ENCODE measurements at regions of chr12 and their contacts with region 1.

Region 1: GRCh38 chr12:122399592-122400373 is 22.7 kb downstream of the CLIP1 start:
- DNase-seq: peak; percentile 82
- H3K4me3 ChIP-seq: peak overlapping the region in 1 of 3 experiments; percentile 20
- H3K27ac ChIP-seq: peak overlapping the region; percentile 94
- H3K4me1 ChIP-seq: peaks cover 21% of the 10 kb centered on the region
- H3K27me3 ChIP-seq: no peaks in the 10 kb centered on the region
- CTCF ChIP-seq: peak; percentile 62 to 67
- POLR2A ChIP-seq: peak; percentile 10

Region 2: DNA sequence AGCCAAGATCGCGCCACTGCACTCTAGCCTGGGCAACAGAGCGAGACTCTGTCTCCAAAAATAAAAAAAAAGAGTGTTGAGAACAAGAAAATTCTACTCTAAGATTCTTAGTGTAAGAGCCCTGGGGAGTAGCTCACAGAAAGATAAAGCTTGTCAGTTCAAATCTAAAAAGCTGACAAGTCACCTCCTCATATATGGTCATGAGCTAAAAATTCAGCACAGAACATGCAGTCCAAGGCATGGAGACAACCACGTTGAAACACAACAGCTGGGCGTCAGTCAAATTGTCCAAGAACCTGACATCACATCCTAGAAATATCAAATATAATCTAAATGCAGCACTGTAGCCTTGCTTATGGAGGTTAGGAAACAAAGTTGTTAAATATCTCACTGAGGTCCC is 25.1 kb before region 1 on chr12:
- CTCF ChIA-PET with region 1: interaction called, 16 read pairs
- POLR2A ChIA-PET with region 1: no interaction called
- dilution Hi-C with region 1: no loop called
- intact Hi-C with region 1: no loop called
- DNase-seq: no peak
- H3K4me3 ChIP-seq: no peak overlapping the region
- H3K27ac ChIP-seq: no peak overlapping the region
- H3K4me1 ChIP-seq: no peaks in the 10 kb centered on the region
- H3K27me3 ChIP-seq: no peaks in the 10 kb centered on the region
- CTCF ChIP-seq: no peak
- POLR2A ChIP-seq: no peak

Region 3: GRCh38 chr12:122413516-122414404 is 14.0 kb after region 1 on chr12:
- CTCF ChIA-PET with region 1: interaction called, 35 read pairs
- POLR2A ChIA-PET with region 1: interaction called, 3 read pairs
- dilution Hi-C with region 1: no loop called
- intact Hi-C with region 1: no loop called
- DNase-seq: peak; percentile 23
- H3K4me3 ChIP-seq: no peak overlapping the region
- H3K27ac ChIP-seq: no peak overlapping the region
- H3K4me1 ChIP-seq: peaks cover 29% of the 10 kb centered on the region
- H3K27me3 ChIP-seq: no peaks in the 10 kb centered on the region
- CTCF ChIP-seq: no peak
- POLR2A ChIP-seq: no peak

Region 4: DNA sequence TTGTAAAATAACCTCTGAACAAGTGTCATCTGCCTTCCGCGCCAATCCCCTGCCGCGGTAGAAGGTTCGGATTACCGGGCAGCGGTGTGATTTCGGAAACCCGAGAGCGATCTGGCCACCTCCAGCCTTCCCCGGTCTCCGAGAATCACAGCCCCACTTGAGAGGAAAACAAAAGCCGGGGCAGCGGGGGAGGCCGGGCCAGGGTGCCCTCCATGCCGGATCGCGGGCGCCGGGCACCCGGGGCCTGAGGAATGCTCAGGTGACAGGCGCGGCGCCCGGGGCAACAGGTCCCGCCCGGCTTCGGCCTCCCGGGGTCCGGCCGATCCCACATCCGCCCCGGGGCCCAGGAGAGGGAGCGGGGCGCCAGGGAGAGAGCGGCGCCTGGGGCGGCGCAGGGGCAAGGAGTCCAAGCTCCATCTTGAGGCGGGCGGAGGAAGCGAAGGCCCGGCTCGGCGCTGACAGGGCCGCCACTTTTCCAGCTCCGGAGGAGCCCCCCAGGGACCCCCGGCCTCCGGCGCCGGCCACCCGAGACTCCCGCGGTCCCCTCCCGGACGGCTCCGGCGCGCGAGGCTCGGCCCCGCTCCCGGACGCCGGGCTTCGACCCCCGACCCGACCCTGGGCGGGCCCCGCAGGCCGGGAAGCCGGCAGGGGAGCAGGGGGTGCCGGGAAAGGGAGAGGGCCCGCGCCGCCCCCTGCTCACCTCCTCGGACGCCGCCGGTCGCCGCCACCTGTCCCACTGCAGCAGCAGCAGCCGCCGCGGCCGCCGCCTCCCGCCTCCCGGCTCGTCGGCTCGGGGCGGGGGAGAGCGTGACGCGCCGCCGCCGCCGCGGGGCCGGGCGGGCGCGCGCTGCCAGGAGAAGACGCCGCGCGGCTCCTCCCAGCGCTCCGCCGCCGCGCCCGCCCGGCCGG is 22.3 kb after region 1 on chr12 and contains the start of gene CLIP1:
- CTCF ChIA-PET with region 1: interaction called, 61 read pairs
- POLR2A ChIA-PET with region 1: interaction called, 8 read pairs
- dilution Hi-C with region 1: no loop called
- intact Hi-C with region 1: loop called (anchors 1 kb)
- DNase-seq: peak; percentile 63
- H3K4me3 ChIP-seq: peak within 1 kb of the TSS; percentile 47 to 82 (median 82)
- H3K27ac ChIP-seq: peak within 1 kb of the TSS; percentile 81
- H3K4me1 ChIP-seq: peaks cover 49% of the 10 kb centered on the region
- H3K27me3 ChIP-seq: no peaks in the 10 kb centered on the region
- CTCF ChIP-seq: peak; percentile 9 to 54
- POLR2A ChIP-seq: peak; percentile 54
- total RNA-seq, gene CLIP1: 71.0 and 84.3 TPM in 2 replicates

Region 5: GRCh38 chr12:122459211-122459610 is 59.4 kb after region 1 on chr12:
- CTCF ChIA-PET with region 1: interaction called, 21 read pairs
- POLR2A ChIA-PET with region 1: no interaction called
- dilution Hi-C with region 1: no loop called
- intact Hi-C with region 1: no loop called
- DNase-seq: no peak
- H3K4me3 ChIP-seq: no peak overlapping the region
- H3K27ac ChIP-seq: no peak overlapping the region
- H3K4me1 ChIP-seq: peaks cover 4% of the 10 kb centered on the region
- H3K27me3 ChIP-seq: no peaks in the 10 kb centered on the region
- CTCF ChIP-seq: no peak
- POLR2A ChIP-seq: no peak